ENCODE measurements at regions of chr1 and their contacts with region 1.

Region 1: GRCh38 chr1:156445789-156446263 is 54.7 kb downstream of the MEF2D start:
- DNase-seq: peak; percentile 87
- H3K4me3 ChIP-seq: peak overlapping the region in 1 of 2 experiments; percentile 36; a peak in 1 of 4 replicates
- H3K27ac ChIP-seq: no peak overlapping the region
- H3K4me1 ChIP-seq: no peaks in the 10 kb centered on the region; a peak in 1 of 4 replicates
- H3K27me3 ChIP-seq: 0 out of 2 replicates have a peak, but pooled peaks cover 10% of the 10 kb centered on the region
- CTCF ChIP-seq: peak; percentile 96
- EP300 ChIP-seq: no peak
- RAD21 ChIP-seq: peak; percentile 95

Region 2: DNA sequence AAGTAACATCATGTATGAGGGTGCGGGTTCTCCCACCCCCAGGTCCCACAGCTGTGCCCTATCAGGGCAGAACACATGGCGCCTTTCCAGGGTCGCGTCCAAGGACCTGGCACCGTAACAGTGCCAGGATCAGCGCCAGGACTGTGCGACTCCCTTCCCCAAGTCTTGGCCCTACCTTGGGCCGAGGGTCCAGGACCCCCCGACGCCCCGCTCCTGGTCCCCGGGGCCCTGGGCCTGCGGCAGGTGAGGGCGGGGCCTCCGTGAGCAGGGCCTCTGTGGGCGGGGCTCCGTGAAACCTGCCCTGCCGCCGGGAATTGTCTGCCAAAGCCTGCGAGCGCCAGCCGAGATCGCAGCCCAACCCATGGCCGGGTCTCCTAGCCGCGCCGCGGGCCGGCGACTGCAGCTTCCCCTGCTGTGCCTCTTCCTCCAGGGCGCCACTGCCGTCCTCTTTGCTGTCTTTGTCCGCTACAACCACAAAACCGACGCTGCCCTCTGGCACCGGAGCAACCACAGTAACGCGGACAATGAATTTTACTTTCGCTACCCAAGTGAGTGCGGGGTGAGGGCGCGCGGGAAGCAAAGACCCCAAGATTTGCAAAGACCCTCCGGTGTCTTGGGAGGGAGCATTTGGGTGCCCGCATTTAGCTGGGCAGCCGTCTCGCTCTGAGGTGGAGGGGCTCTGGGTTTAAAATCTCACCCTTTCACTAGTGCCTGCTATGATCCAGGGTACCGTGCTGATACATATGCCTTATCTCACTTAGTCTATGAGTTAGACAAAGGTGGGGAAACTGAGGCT is 76.7 kb before region 1 on chr1 and contains the start of gene RHBG:
- CTCF ChIA-PET with region 1: interaction called, 30 read pairs
- POLR2A ChIA-PET with region 1: no interaction called
- DNase-seq: no peak
- H3K4me3 ChIP-seq: no peak within 1 kb of the TSS
- H3K27ac ChIP-seq: peak within 1 kb of the TSS in 1 of 2 experiments; percentile 64; a peak in 2 of 4 replicates
- H3K4me1 ChIP-seq: peaks cover 0 to 17% of the 10 kb centered on the region in 2 experiments; a peak in 1 of 4 replicates
- H3K27me3 ChIP-seq: no peaks in the 10 kb centered on the region
- CTCF ChIP-seq: no peak
- EP300 ChIP-seq: no peak
- RAD21 ChIP-seq: no peak
- polyA plus RNA-seq, gene RHBG: 0.18 TPM in 1 of 2 replicates, not detected in the other

Region 3: GRCh38 chr1:156394835-156395461 is 50.9 kb before region 1 on chr1:
- CTCF ChIA-PET with region 1: interaction called, 47 read pairs
- POLR2A ChIA-PET with region 1: no interaction called
- DNase-seq: no peak
- H3K4me3 ChIP-seq: no peak overlapping the region
- H3K27ac ChIP-seq: no peak overlapping the region
- H3K4me1 ChIP-seq: peaks cover 0 to 6% of the 10 kb centered on the region in 2 experiments; a peak in 1 of 4 replicates
- H3K27me3 ChIP-seq: no peaks in the 10 kb centered on the region; the same call in 1 of the 2 replicates
- CTCF ChIP-seq: no peak
- EP300 ChIP-seq: no peak
- RAD21 ChIP-seq: no peak

Region 4: DNA sequence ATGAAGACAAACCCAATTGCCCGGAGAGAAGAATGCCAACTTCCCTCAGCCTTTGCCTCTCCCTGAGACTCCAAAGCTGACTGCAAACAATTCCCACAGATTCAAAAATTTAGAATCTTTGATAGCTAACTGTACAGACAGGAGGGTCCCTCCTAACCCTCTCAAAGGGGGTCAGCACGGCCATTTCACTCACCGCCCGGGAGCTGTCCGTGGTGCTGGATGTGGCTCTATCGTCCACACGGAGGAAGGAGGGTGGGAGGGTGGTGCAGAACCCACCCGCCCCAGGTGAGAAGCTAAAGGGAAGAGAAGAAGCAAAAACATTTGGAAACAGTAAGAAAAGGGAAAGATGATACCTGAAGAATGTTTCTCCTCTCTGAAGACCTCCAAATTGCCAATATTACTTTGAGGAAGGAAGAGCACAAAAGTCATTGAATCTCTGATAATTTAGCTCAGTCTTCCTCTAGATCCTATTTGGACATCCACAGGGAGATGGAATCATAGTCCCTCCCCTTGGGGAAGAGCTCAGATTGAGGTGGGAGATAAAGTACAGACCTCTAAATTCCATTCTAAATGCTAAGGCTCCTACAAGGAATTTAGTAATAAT is 31.3 kb before region 1 on chr1:
- CTCF ChIA-PET with region 1: interaction called, 46 read pairs
- POLR2A ChIA-PET with region 1: no interaction called
- DNase-seq: no peak
- H3K4me3 ChIP-seq: no peak overlapping the region
- H3K27ac ChIP-seq: no peak overlapping the region
- H3K4me1 ChIP-seq: peaks cover 0 to 4% of the 10 kb centered on the region in 2 experiments; a peak in 2 of 4 replicates
- H3K27me3 ChIP-seq: peaks cover 2% of the 10 kb centered on the region; the same call in 1 of the 2 replicates
- CTCF ChIP-seq: no peak
- EP300 ChIP-seq: no peak
- RAD21 ChIP-seq: no peak

Region 5: DNA sequence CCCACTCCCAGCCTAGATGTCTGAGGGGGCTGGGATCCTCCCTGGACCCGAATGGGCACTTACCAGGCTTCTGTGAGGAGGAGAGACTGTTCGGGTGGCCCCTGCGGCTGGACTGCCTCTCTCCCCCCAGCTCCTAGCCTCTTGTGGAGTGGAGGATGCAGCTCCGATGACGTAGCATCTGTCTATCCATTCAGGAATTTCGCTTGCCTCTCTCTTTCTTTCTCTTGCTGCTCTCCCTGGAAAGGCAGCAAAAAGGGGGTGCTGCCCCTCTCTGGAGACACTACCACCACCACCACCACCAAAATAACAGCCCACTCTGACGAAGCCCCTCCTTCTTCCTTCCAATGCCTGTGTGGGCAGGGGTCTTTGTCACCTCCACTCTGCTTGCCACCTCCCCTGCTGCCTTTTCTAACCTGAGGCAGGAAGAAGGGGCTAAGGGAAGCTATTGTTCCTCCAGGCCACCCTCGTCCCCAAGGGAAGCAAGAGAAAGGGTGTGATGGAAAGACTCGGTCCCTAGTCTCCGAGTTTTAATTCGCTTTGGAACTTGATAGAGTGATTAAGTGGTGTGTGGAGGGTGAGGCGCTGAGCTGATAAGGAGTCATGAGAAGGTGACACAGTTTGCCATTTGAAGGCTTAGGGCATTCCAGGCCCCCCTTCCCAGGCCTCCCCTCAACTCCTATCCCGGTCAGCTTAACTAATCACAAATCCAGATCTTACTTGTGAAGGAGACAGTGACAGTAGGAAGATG is 16.3 kb before region 1 on chr1:
- CTCF ChIA-PET with region 1: interaction called, 47 read pairs
- POLR2A ChIA-PET with region 1: interaction called, 4 read pairs
- DNase-seq: no peak
- H3K4me3 ChIP-seq: no peak overlapping the region
- H3K27ac ChIP-seq: no peak overlapping the region
- H3K4me1 ChIP-seq: no peaks in the 10 kb centered on the region; a peak in 1 of 4 replicates
- H3K27me3 ChIP-seq: peaks cover 70% of the 10 kb centered on the region
- CTCF ChIP-seq: no peak
- EP300 ChIP-seq: no peak
- RAD21 ChIP-seq: no peak

Region 6: DNA sequence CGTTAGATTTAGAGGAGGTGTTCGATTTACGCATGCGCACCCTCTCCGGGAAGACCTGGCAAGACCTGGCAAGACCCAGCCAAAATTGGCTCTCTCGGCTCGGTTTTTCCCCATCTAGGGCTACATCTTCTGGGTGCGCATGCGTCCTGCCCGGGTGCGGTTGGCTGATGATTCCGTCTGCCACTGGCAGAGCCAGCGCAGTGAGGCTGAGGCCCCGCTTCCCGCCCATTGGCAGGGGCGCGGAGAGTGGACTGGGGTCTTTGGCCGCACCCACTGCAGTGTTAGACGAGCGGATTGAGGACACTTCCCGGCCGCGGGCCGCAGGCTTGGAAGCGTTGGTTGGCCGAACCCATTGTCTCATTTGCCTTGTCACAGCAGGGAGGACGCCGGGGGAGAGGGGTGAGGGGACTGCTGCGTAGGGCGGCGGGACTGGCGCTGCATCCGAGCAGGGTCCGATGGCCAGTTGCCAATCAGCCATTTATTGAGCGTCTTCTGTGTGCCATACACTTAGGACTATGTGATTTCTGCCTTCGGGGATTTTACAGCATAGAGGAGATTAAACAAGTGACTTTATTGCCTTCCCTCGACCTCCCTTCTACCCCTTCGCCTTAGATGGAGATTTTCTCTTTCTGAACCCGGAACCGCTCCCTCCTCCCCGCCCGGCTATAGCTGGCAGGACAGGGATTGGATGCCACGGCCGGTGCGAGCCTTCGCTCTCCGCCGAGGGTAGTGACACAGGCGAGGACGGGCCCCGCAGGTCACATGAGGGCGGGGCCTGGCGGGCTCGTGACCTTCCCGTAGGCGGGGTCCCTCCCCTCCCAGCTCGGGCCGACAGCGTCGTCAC is 11.0 kb after region 1 on chr1:
- CTCF ChIA-PET with region 1: interaction called, 33 read pairs
- POLR2A ChIA-PET with region 1: no interaction called
- DNase-seq: peak; percentile 96
- H3K4me3 ChIP-seq: peak overlapping the region; percentile 56 to 70
- H3K27ac ChIP-seq: peak overlapping the region; percentile 96 to 97
- H3K4me1 ChIP-seq: peaks cover 3 to 5% of the 10 kb centered on the region in 2 experiments; a peak in 2 of 4 replicates
- H3K27me3 ChIP-seq: no peaks in the 10 kb centered on the region
- CTCF ChIP-seq: no peak
- EP300 ChIP-seq: no peak
- RAD21 ChIP-seq: no peak

Region 7: GRCh38 chr1:156852418-156852874 is 406.6 kb after region 1 on chr1:
- CTCF ChIA-PET with region 1: no interaction called
- POLR2A ChIA-PET with region 1: no interaction called
- DNase-seq: peak; percentile 96
- H3K4me3 ChIP-seq: no peak overlapping the region
- H3K27ac ChIP-seq: peak overlapping the region in 1 of 2 experiments; percentile 94; a peak in 2 of 4 replicates
- H3K4me1 ChIP-seq: peaks cover 0 to 45% of the 10 kb centered on the region in 2 experiments; a peak in 3 of 4 replicates
- H3K27me3 ChIP-seq: peaks cover 6% of the 10 kb centered on the region; the same call in 1 of the 2 replicates
- CTCF ChIP-seq: no peak
- EP300 ChIP-seq: peak in 1 of 2 experiments; percentile 88; a peak in 2 of 4 replicates
- RAD21 ChIP-seq: peak; percentile 0; the same call in 1 of the 2 replicates

Measured in SK-N-SH (cell line).